ENCODE measurements at regions of chr1 and their contacts with region 1.

Region 1: DNA sequence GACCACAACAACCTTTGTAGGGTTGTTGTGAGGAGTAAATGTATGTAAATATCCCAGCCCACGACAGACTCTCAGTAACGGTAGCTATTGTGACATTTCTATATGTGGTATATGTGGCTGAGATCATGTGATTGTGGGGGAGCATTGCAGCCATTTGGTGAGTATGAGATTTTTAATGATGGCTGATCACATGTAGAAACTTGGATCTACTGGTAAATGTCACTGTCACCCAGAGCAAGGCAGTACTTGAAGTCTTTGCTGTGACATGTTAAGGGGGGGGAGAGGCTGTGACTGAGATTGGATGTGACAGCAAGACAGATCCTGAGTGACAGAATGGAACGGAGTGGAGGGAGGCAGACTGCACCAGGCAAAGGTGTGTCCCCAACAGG is 23.9 kb upstream of the MEF2D start:
- DNase-seq: no peak
- H3K4me3 Mint-ChIP-seq: peak overlapping the region; percentile 40
- H3K27ac Mint-ChIP-seq: peak overlapping the region; percentile 82
- H3K4me1 Mint-ChIP-seq: peaks cover 32% of the 10 kb centered on the region
- H3K27me3 Mint-ChIP-seq: no peaks in the 10 kb centered on the region

Region 2: DNA sequence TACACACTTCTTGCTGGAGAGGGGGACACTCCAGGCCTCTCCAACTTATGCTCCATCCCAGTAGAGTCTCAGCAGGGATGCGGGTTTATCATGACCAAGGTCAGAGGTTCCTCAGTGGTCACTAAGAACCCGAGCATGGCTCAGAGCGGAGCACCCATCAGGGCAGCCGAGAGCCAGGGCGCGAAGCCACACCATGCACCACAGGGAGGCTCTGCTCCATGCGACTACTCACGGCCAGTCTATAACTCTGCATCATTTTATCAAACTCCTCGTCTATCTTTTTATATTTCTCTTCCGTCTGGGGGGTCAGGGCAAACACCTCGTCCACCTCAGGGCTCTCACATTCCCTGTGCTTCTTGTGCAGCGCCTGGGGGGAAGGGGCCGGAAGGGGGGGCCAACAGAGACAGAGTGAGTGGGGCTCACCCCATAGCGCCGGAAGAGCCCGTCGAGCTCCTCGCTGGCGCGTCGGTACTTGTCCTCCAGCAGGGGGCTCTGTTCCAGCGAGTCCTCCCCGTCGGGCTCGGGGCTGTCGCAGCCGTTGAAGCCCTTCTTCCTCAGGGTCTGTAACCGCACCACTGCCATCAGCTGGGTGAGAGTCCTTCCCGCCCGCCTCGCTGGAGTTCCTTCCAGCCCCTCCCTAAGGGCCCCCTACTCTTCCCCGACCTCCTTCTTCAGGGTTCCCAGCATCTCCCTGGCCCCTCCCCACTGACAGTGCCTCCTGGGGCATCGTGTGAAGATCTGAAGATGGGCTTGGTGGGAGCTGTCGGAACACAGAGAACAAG is 43.9 kb before region 1 on chr1:
- intact Hi-C with region 1: loop called (anchors 1 kb)
- DNase-seq: peak; percentile 63
- H3K4me3 Mint-ChIP-seq: peak overlapping the region; percentile 17
- H3K27ac Mint-ChIP-seq: peak overlapping the region; percentile 78
- H3K4me1 Mint-ChIP-seq: peaks cover 53% of the 10 kb centered on the region
- H3K27me3 Mint-ChIP-seq: no peaks in the 10 kb centered on the region

Region 3: GRCh38 chr1:156489166-156489934 is 35.1 kb before region 1 on chr1:
- intact Hi-C with region 1: loop called (anchors 2 kb)
- DNase-seq: no peak
- H3K4me3 Mint-ChIP-seq: peak overlapping the region; percentile 65
- H3K27ac Mint-ChIP-seq: peak overlapping the region; percentile 88
- H3K4me1 Mint-ChIP-seq: peaks cover 77% of the 10 kb centered on the region
- H3K27me3 Mint-ChIP-seq: no peaks in the 10 kb centered on the region

Region 4: DNA sequence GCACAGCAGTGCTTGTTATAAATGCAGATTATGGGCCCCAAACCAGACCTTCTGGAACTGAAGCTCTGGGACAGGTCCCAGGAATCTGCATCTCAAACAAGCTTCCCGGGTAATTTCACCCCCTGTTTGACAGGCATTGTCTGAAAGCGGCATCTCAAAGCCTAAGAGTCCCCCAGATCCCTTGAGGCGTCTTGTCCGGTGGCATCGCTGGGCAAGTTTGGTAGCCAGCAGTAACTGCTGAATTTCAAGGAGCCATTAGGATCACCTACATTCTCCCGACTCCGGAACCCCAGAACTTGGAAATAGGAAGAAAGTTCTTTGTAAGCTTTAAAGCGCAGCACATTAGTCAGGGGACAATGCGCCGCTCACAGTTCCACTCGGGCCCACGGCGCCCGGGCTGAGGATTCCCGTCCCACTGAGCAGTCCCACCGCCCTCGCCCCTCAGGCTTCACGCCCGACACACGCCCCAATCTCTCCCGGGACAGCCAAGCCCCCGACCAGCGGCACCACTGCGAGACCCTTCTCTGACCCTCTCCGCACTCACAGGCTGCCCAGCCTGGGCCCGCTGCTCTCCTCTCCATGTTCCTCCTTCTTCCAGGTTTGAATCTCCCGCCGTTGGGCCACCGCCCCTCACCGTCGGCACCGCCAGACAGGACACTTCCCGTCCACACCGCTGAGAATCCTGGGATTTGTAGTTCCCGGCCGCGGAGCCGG is 47.6 kb after region 1 on chr1 and contains the start of gene IQGAP3:
- intact Hi-C with region 1: loop called (anchors 5 kb)
- DNase-seq: peak; percentile 74
- H3K4me3 Mint-ChIP-seq: peak within 1 kb of the TSS; percentile 96
- H3K27ac Mint-ChIP-seq: peak within 1 kb of the TSS; percentile 76
- H3K4me1 Mint-ChIP-seq: peaks cover 28% of the 10 kb centered on the region
- H3K27me3 Mint-ChIP-seq: peaks cover 18% of the 10 kb centered on the region
- total RNA-seq, gene IQGAP3: 10.3 and 11.2 TPM in 2 replicates

Region 5: DNA sequence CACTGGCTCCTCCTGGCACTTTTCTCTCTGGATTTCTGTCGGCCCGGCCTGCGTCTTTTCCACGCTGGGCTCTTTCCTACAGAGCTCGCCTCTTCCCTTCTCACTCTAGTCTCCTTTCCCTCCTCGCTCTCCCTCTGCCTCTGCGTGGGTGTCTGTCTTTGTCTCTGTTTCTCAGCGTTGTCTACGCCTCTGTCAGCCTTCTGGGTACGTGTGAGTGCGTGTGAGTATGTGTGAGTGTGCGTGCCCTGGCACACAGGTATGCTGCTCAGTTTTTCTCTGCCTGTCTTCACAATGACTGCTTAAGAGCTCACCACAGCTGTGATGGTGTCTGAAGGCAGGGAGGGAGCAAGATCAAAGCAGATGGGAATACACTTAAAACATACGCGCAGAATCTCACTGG is 1546.7 kb after region 1 on chr1:
- intact Hi-C with region 1: no loop called
- DNase-seq: no peak
- H3K4me3 Mint-ChIP-seq: no peak overlapping the region
- H3K27ac Mint-ChIP-seq: no peak overlapping the region
- H3K4me1 Mint-ChIP-seq: no peaks in the 10 kb centered on the region
- H3K27me3 Mint-ChIP-seq: peaks cover 7% of the 10 kb centered on the region

Region 6: GRCh38 chr1:158140764-158141192 is 1616.3 kb after region 1 on chr1:
- intact Hi-C with region 1: no loop called
- DNase-seq: no peak
- H3K4me3 Mint-ChIP-seq: no peak overlapping the region
- H3K27ac Mint-ChIP-seq: no peak overlapping the region
- H3K4me1 Mint-ChIP-seq: no peaks in the 10 kb centered on the region
- H3K27me3 Mint-ChIP-seq: peaks cover 3% of the 10 kb centered on the region

Measured in activated T-helper 1 cell treated with anti-CD3 and anti-CD28 coated beads, Interleukin-12 subunit alpha, Interleukin-12 subunit beta, Interleukin-2, Interleukin-4 antibody, amounts not matched to agents 30 ng/mL and 10 ng/mL and 1 ng/mL, durations not matched to agents 14 hours and 24 hours and 36 hours (primary cell).